ENCODE measurements at regions of chr18 and their contacts with region 1.

Region 1: DNA sequence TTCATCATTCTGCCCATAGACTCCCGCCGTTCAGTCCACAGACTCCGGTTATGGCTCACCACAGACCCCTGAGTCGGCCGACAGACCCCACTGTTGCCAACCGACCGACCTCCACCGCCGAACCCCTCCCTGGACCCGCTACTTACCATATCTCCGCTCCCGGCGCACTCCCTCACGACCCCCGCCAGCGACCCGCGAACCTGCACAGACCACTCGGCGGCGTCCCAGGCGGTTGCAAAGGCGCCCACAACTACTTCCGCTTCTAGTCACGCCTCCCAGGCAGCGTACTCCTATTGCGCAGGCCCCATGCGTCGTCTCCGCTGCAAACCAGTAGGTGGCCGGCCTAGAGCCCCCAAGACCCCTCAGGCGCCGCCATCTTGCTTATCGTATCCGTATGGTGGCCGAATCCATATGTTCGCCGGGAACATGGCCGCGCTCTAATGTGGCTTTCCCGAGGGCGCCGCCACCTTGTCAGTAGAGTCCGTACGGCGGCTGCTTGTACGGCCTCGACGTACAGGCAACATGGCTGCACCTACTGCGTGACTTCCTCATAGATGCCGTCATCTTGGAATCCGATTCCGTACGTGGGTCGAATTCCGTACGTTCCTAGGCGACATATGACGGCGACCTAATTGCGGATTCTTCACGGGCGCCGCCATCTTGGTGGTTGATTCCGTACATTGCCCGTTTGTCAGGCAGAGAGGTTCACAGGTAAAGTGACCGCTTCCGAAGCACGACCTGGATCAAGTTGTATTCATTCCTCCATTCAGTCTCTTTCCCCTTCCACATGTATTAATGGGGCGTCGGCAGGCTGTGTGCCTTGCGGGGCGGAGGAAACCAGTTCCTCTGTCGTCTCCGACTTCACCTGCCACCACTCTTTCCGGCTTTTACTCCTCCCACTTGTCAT is at the start of gene CXXC1:
- DNase-seq: peak; percentile 96 to 99 (median 98)
- H3K4me3 ChIP-seq: peak within 1 kb of the TSS; percentile 82 to 88
- H3K4me3 Mint-ChIP-seq: peak within 1 kb of the TSS; percentile 96 to 100 (median 99)
- H3K27ac ChIP-seq: peak within 1 kb of the TSS; percentile 82
- H3K27ac Mint-ChIP-seq: peak within 1 kb of the TSS; percentile 91 to 100 (median 100)
- H3K4me1 ChIP-seq: peaks cover 14% of the 10 kb centered on the region
- H3K4me1 Mint-ChIP-seq: peaks cover 19 to 44% (median 28%) of the 10 kb centered on the region in 4 donors
- H3K27me3 ChIP-seq: no peaks in the 10 kb centered on the region
- H3K27me3 Mint-ChIP-seq: no peaks in the 10 kb centered on the region
- total RNA-seq, gene CXXC1: 165 to 191 TPM

Region 2: DNA sequence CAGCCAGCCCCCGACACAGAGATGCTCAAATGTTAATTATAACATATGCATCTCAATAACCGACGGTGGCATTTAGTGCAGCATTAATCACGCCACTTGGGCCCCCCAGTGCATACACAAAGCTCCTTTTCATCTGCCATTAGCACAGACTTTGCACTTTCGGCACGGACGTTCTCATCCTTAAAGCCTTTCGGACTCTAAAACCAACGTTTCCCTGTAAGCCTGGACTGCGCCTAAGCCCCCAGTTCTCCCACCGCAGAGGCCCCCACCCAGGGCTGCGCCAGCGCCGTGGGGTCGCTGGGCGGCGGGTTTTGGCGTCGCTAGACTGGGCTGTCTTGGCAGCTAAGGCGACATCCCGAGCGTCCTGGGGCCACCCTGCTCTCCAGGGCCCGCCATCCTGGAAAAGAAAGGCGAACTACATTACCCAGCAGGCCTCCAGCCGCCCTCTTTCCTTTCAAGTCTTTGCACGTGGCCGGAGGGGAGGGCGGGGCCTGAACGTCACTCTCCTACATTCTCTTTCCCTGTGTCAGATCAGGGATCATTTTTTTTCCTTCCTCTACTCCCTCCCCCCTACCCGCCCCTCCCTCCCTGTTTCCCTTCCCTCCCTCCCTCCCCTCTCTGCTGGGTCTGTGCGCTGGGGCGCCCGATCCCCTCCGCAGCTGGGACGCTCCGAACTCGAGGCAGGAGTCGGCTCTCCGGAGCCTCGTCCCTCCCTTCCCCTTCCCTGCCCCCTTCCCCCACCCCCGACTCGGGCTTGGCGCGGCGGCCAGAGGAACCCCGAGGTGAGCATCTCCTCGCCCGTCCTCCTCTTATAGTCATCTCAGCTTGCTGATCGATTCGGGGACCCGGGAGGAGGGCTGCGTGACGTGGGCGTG is 1748.9 kb before region 1 on chr18 and contains the start of gene CTIF:
- CTCF ChIA-PET with region 1: no interaction called
- POLR2A ChIA-PET with region 1: no interaction called
- intact Hi-C with region 1: loop called (anchors 5 kb)
- DNase-seq: peak; percentile 46 to 70 (median 52)
- H3K4me3 ChIP-seq: peak within 1 kb of the TSS; percentile 65 to 68
- H3K4me3 Mint-ChIP-seq: peak within 1 kb of the TSS; percentile 89 to 95 (median 93)
- H3K27ac ChIP-seq: peak within 1 kb of the TSS; percentile 6
- H3K27ac Mint-ChIP-seq: peak within 1 kb of the TSS in 6 of 7 donors; percentile 32 to 89 (median 80)
- H3K4me1 ChIP-seq: no peaks in the 10 kb centered on the region
- H3K4me1 Mint-ChIP-seq: peaks cover 1 to 12% (median 7%) of the 10 kb centered on the region in 4 donors
- H3K27me3 ChIP-seq: no peaks in the 10 kb centered on the region
- H3K27me3 Mint-ChIP-seq: peaks cover 2 to 3% of the 10 kb centered on the region in 2 donors
- total RNA-seq, gene CTIF: 5.2 to 6.5 TPM

Region 3: DNA sequence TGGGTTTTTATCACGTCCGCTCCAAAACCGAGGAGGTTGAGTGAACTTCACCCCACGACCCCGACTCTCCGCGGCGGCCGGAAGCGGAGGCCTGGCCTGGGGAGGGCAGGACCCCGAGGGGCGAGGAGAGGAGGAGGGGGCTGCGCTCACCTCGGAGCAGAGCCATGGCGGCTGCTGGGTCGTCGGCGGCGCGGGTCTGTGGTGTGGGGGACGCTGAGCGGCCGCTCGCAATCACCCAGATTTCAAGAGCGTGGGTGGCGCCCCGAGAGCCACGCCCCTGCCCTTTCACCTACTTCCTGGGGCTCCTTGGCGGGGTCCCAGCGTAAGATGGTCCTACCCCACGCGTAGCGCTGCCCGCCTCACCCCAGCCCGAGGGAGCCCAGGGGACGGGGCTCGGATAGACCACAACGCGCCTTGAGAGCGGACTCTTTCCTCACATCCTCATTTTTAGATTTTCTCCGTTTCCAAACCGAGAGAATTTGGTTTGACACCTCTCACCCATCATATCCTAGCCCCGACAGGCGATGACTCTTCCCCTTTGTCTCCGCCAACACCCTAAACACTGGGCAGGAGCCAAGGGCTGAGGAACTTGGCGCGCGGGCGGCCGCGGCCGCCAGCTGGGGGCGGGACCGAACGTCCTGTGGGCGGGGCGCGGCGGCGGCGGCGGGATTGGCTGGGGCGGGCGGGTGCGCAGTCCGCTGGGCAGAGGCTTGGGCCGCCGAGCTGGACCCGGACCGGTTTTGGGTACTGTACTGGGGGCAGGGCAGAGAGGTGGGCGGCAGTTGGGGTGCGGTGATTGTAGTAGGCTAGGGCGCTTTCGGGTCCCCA is 474.2 kb before region 1 on chr18 and contains the start of gene ACAA2:
- CTCF ChIA-PET with region 1: no interaction called
- POLR2A ChIA-PET with region 1: no interaction called
- intact Hi-C with region 1: loop called (anchors 5 kb)
- DNase-seq: peak; percentile 68 to 84 (median 70)
- H3K4me3 ChIP-seq: peak within 1 kb of the TSS; percentile 88 to 90
- H3K4me3 Mint-ChIP-seq: peak within 1 kb of the TSS; percentile 95 to 100 (median 96)
- H3K27ac ChIP-seq: peak within 1 kb of the TSS; percentile 80
- H3K27ac Mint-ChIP-seq: peak within 1 kb of the TSS; percentile 91 to 99 (median 97)
- H3K4me1 ChIP-seq: peaks cover 51% of the 10 kb centered on the region
- H3K4me1 Mint-ChIP-seq: peaks cover 39 to 69% (median 53%) of the 10 kb centered on the region in 4 donors
- H3K27me3 ChIP-seq: no peaks in the 10 kb centered on the region
- H3K27me3 Mint-ChIP-seq: no peaks in the 10 kb centered on the region
- total RNA-seq, gene ACAA2: 21.8 to 23.8 TPM

Region 4: DNA sequence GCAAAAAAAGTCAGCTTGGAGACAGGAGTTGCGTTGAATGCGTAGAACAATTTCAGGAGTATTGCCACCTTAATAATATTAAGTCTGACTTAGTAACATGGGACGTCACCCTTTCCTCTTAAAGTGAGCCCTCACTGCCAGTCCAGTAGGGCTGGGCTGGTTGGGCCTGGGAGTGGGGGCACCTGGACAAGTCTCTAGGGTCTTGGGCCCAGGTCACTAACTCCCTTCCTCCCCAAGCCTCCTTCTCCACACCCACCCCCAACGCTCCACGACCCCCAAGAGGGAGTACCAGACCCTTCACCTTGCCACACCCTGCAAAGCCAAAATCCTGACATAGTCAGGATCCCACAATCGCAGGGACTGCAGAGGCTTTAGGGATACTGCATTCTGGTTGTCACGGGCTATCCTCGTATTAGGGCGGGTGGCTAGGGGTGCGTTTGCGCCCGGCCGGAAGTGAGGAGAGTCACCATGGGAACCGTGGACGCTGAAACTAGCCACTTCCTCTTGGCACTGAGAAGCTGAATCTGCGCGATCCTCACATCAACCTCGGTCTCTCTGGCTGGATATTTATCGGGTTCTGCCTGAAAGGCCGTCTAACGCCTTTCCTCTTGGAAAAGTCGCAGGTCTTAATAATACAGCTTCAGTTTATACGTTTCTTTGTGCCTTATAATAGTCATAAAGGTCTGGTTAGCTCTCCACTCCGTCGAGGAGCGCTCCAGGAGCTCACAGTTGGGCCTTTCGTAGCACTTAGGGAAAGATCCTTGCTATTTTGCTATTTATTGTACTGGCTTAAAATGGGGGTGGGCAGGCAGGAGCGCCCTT is 10.1 kb after region 1 on chr18:
- CTCF ChIA-PET with region 1: no interaction called
- POLR2A ChIA-PET with region 1: interaction called, 5 read pairs
- intact Hi-C with region 1: loop called (anchors 1 kb)
- DNase-seq: peak; percentile 65 to 73 (median 70)
- H3K4me3 ChIP-seq: peak overlapping the region in 1 of 2 donors; percentile 36
- H3K4me3 Mint-ChIP-seq: peak overlapping the region; percentile 76 to 86 (median 81)
- H3K27ac ChIP-seq: no peak overlapping the region
- H3K27ac Mint-ChIP-seq: peak overlapping the region in 5 of 7 donors; percentile 25 to 90 (median 69)
- H3K4me1 ChIP-seq: peaks cover 11% of the 10 kb centered on the region
- H3K4me1 Mint-ChIP-seq: peaks cover 5 to 12% (median 7%) of the 10 kb centered on the region in 4 donors
- H3K27me3 ChIP-seq: peaks cover 6% of the 10 kb centered on the region
- H3K27me3 Mint-ChIP-seq: peaks cover 19 to 23% of the 10 kb centered on the region in 2 donors

Region 5: DNA sequence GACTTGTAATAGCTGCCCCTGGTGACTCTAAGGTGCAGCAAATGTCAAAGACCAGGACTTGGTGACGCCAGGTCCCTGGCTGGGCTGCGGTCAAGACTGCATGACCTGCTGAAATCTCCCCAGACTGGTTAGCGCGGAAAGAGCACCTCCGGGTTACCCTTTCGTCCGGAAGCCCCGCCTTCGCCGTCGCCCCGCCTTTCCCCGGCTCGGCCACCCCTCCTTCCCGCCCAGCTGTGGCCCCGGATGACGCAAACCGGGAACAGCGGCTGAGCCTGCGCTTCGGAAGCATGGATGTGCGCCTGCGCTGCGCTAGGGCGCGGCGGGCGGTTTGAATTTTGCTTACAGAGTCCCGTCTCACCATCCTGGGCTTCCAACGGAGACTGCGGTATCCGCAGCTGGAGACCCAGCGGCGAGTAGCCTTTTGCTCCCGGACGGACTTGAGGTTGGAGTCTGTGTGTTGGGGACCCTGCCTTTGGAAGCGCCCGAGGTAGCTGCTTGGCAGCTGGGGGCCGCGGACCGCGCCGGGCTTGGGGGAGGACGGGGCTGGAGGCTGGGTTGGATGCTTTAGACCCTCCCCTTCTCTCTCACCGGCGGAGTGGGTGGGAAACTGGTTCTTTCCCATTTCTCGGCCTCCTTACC is 87.2 kb after region 1 on chr18 and contains the start of gene SKA1:
- CTCF ChIA-PET with region 1: no interaction called
- POLR2A ChIA-PET with region 1: interaction called, 3 read pairs
- intact Hi-C with region 1: loop called (anchors 1 kb)
- DNase-seq: peak; percentile 89 to 91 (median 90)
- H3K4me3 ChIP-seq: peak within 1 kb of the TSS; percentile 60 to 63
- H3K4me3 Mint-ChIP-seq: peak within 1 kb of the TSS; percentile 79 to 85 (median 82)
- H3K27ac ChIP-seq: peak within 1 kb of the TSS; percentile 57
- H3K27ac Mint-ChIP-seq: peak within 1 kb of the TSS; percentile 81 to 94 (median 91)
- H3K4me1 ChIP-seq: peaks cover 14% of the 10 kb centered on the region
- H3K4me1 Mint-ChIP-seq: peaks cover 6 to 15% (median 11%) of the 10 kb centered on the region in 4 donors
- H3K27me3 ChIP-seq: peaks cover 5% of the 10 kb centered on the region
- H3K27me3 Mint-ChIP-seq: peaks cover 6 to 10% of the 10 kb centered on the region in 2 donors
- total RNA-seq, gene SKA1: 0.28 to 0.47 TPM

Measured in CD4-positive, alpha-beta memory T cell (primary cell).